GM12878 (cell line): ENCODE measurements at regions of chr4 and their contacts with region 1.

Region 1: GRCh38 chr4:26325191-26325590 is 4.4 kb downstream of the RBPJ start:
- DNase-seq: no peak
- ATAC-seq: peak; percentile 63
- H3K4me3 ChIP-seq: peak overlapping the region; percentile 10; the same call in 1 of the 2 replicates
- H3K27ac ChIP-seq: no peak overlapping the region
- H3K4me1 ChIP-seq: no peaks in the 10 kb centered on the region
- H3K27me3 ChIP-seq: no peaks in the 10 kb centered on the region
- CTCF ChIP-seq: peak; percentile 46 to 64 (median 56); a peak in 5 of 6 replicates
- EP300 ChIP-seq: no peak
- POLR2A ChIP-seq: no peak
- RAD21 ChIP-seq: peak; percentile 78

Region 2: GRCh38 chr4:26061248-26061986 is 263.8 kb before region 1 on chr4:
- CTCF ChIA-PET with region 1: interaction called, 150 read pairs
- POLR2A ChIA-PET with region 1: no interaction called
- RAD21 ChIA-PET with region 1: interaction called, 12 read pairs
- SMC1A ChIA-PET with region 1: interaction called, 24 read pairs
- in situ Hi-C with region 1: no loop called
- intact Hi-C with region 1: no loop called
- DNase-seq: no peak
- ATAC-seq: peak; percentile 96
- H3K4me3 ChIP-seq: no peak overlapping the region
- H3K27ac ChIP-seq: no peak overlapping the region
- H3K4me1 ChIP-seq: peaks cover 9% of the 10 kb centered on the region; the same call in 1 of the 2 replicates
- H3K27me3 ChIP-seq: no peaks in the 10 kb centered on the region; a peak in 3 of 4 replicates
- CTCF ChIP-seq: peak; percentile 64 to 76 (median 76); a peak in 5 of 6 replicates
- EP300 ChIP-seq: no peak
- POLR2A ChIP-seq: no peak
- RAD21 ChIP-seq: peak; percentile 94

Region 3: DNA sequence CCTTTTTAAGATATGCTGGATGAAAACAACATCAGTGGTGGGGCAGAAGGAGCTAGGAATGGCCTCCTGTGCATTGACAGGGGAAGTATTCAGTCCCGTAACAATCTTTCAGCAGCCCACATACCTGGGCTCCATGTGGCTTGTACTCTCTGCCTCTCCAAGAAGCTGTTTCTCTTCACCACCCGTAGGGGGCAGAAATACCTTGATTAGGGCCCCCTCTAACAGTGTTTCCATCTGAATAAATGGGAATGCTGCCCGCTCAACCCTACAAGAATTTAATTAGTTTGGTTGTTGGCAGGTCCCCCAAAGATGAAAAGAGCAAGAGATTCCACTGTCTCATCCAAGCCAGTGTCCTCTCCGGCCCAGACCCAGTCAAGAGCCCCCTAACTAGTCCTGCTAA is 256.0 kb before region 1 on chr4:
- CTCF ChIA-PET with region 1: interaction called, 150 read pairs
- POLR2A ChIA-PET with region 1: interaction called, 7 read pairs
- RAD21 ChIA-PET with region 1: interaction called, 37 read pairs
- SMC1A ChIA-PET with region 1: interaction called, 24 read pairs
- in situ Hi-C with region 1: loop called (anchors 5 kb)
- intact Hi-C with region 1: no loop called
- DNase-seq: no peak
- ATAC-seq: peak; percentile 89
- H3K4me3 ChIP-seq: no peak overlapping the region
- H3K27ac ChIP-seq: no peak overlapping the region
- H3K4me1 ChIP-seq: peaks cover 4% of the 10 kb centered on the region
- H3K27me3 ChIP-seq: no peaks in the 10 kb centered on the region; a peak in 1 of 4 replicates
- CTCF ChIP-seq: peak; percentile 52 to 64 (median 56); a peak in 5 of 6 replicates
- EP300 ChIP-seq: no peak
- POLR2A ChIP-seq: no peak
- RAD21 ChIP-seq: peak; percentile 75

Region 4: GRCh38 chr4:26088433-26088928 is 236.7 kb before region 1 on chr4:
- CTCF ChIA-PET with region 1: interaction called, 127 read pairs
- POLR2A ChIA-PET with region 1: interaction called, 4 read pairs
- RAD21 ChIA-PET with region 1: interaction called, 76 read pairs
- SMC1A ChIA-PET with region 1: interaction called, 97 read pairs
- in situ Hi-C with region 1: no loop called
- intact Hi-C with region 1: no loop called
- DNase-seq: peak; percentile 80
- ATAC-seq: peak; percentile 92
- H3K4me3 ChIP-seq: no peak overlapping the region
- H3K27ac ChIP-seq: peak overlapping the region; percentile 29; the same call in 1 of the 2 replicates
- H3K4me1 ChIP-seq: peaks cover 30% of the 10 kb centered on the region
- H3K27me3 ChIP-seq: no peaks in the 10 kb centered on the region
- CTCF ChIP-seq: no peak
- EP300 ChIP-seq: peak; percentile 23 to 72; a peak in 2 of 4 replicates
- POLR2A ChIP-seq: no peak
- RAD21 ChIP-seq: no peak

Region 5: DNA sequence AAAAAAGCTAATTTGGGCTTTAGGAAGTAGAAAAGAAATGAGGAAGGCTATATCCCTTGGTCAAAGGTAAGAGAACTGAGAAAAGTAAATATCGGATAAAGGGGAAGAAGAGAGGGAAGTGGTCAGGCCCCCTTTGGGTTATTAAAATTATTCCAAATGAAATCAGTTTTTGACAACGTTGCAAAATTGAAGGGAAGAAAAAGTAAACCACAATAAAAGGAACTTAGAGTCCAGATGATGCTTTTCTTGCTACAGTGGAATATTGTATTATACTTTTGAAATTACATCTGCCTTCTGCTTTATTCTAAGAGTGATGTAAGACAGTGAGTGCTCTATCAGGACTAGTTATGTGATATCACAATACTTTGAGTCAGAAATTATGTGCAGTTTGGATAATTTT is 63.8 kb before region 1 on chr4:
- CTCF ChIA-PET with region 1: no interaction called
- POLR2A ChIA-PET with region 1: no interaction called
- RAD21 ChIA-PET with region 1: no interaction called
- SMC1A ChIA-PET with region 1: no interaction called
- in situ Hi-C with region 1: no loop called
- intact Hi-C with region 1: no loop called
- DNase-seq: no peak
- ATAC-seq: no peak
- H3K4me3 ChIP-seq: no peak overlapping the region
- H3K27ac ChIP-seq: no peak overlapping the region
- H3K4me1 ChIP-seq: no peaks in the 10 kb centered on the region
- H3K27me3 ChIP-seq: no peaks in the 10 kb centered on the region
- CTCF ChIP-seq: no peak
- EP300 ChIP-seq: no peak
- POLR2A ChIP-seq: no peak
- RAD21 ChIP-seq: no peak